Activated CD4-positive, alpha-beta memory T cell treated with anti-CD3 and anti-CD28 coated beads for 36 hours (primary cell): ENCODE measurements at regions of chr12 and their contacts with region 1.

Region 1: GRCh38 chr12:54398995-54399793 is 14.7 kb upstream of the ZNF385A start:
- DNase-seq: peak; percentile 92
- H3K4me3 Mint-ChIP-seq: no peak overlapping the region
- H3K27ac Mint-ChIP-seq: no peak overlapping the region
- H3K4me1 Mint-ChIP-seq: peaks cover 9% of the 10 kb centered on the region
- H3K27me3 Mint-ChIP-seq: no peaks in the 10 kb centered on the region

Region 2: DNA sequence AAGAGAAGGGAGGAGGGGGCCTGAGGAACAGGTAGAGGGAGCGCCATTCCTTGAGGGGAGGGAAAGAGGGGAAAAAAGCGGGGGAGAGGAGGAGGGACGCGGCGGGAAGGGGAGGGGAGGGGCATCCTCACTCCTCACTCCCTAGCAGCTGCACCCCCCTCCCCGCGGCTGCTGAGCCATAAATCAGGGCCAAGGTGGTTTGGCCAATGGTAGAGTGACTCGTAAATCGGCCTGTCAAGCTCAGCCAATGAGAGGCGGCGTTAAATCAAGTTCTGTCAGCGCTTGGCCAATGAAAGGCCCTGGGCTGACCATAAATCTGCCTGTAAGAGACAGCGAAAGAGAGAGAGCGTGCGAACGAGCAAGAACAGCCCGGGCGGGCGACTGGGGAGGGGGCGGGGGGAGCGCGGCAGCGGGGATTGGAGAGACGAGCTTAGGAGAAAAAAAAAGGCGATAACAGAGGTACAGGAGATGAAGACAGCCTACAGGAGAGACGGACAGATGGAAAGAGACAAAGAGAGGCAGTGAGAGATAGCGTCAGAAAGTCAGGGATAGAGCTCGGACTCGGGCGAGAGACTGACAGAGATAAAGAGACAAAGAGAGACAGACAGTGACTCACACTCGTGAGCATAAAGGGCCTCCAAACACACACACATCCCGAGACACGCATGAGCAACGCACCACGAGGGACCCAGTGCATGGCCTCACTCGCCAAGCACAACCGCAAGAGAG is 40.0 kb before region 1 on chr12:
- CTCF ChIA-PET with region 1: interaction called, 11 read pairs
- POLR2A ChIA-PET with region 1: no interaction called
- intact Hi-C with region 1: no loop called
- DNase-seq: peak; percentile 97
- H3K4me3 Mint-ChIP-seq: no peak overlapping the region
- H3K27ac Mint-ChIP-seq: no peak overlapping the region
- H3K4me1 Mint-ChIP-seq: peaks cover 16% of the 10 kb centered on the region
- H3K27me3 Mint-ChIP-seq: no peaks in the 10 kb centered on the region

Region 3: DNA sequence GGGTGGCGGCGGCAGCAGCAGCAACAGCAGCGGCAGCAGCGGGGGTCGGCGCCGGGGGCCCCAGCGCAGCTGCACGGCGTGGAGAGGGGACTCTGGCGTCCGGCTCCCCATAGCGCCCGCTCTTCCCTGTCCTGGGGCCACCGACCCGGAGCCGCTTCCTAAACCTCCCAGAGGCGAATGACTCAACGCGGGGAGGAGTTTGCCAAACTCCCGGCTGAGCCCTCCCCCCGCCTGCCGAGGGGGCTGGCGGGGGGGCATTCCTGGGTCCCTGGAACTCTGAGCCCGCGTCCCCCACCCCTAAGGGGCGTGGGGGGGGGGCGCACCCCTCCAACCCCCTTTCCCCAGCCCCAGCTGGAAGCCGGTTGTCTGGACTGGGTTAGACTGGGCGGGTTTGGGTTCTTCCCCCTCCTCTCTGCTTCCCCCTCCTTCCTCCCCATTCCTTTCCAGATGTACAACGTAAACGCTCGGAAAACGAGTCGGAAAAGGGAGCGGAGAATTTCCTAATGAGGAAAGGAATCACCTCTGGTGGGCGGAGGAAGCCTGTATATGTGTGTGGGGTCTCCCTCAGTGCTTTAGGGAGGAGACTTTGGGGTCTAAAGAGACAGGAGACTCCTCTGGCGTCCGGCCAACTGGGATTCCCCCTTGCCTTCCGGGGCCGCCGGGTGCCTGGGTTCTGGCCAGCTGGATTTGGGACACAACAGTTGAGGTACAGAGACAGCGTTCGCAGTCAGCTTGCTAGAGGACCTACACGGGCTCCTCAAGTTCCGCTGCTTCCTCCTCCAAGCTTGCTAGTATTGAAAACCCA is 20.1 kb after region 1 on chr12 and contains the start of gene ITGA5:
- CTCF ChIA-PET with region 1: interaction called, 319 read pairs
- POLR2A ChIA-PET with region 1: interaction called, 3 read pairs
- intact Hi-C with region 1: no loop called
- DNase-seq: peak; percentile 63
- H3K4me3 Mint-ChIP-seq: peak within 1 kb of the TSS; percentile 93
- H3K27ac Mint-ChIP-seq: peak within 1 kb of the TSS; percentile 91
- H3K4me1 Mint-ChIP-seq: peaks cover 45% of the 10 kb centered on the region
- H3K27me3 Mint-ChIP-seq: no peaks in the 10 kb centered on the region
- total RNA-seq, gene ITGA5: 33.8 to 34.9 TPM

Region 4: DNA sequence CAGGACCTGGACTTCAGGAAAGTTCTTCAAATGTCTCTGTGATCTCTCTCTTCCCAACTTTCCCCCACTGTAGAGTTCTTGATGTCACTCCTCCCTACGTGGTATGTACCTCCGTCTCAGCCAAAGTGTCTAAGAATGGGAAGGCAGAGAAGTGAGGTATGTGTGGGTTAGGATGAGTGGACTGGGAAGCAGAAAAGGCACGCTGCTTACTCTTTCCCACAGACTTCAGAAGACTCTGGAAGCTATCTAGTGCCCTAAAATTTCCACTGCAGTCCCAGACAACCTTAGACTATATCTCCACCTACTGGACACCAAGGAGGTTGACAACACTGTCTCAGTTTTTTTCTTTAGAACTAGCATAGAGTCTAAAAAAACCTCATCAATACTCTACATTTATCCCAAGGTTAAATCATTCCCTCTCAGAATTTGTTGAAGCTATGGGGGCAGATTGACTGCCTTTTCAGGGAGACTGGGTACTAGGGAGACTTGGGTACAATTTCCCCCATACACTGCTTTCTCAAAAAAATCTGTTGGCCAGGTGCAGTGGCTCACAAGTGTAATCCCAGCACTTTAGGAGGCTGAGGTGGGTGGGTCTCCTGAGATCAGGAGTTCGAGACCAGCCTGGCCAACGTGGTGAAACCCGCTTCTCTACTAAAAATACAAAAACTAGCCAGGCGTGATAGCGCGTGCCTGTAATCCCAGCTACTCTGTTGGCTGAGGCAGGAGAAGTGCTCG is 40.5 kb after region 1 on chr12:
- CTCF ChIA-PET with region 1: interaction called, 693 read pairs
- POLR2A ChIA-PET with region 1: interaction called, 22 read pairs
- intact Hi-C with region 1: loop called (anchors 1 kb)
- DNase-seq: no peak
- H3K4me3 Mint-ChIP-seq: no peak overlapping the region
- H3K27ac Mint-ChIP-seq: no peak overlapping the region
- H3K4me1 Mint-ChIP-seq: peaks cover 6% of the 10 kb centered on the region
- H3K27me3 Mint-ChIP-seq: peaks cover 2% of the 10 kb centered on the region

Region 5: DNA sequence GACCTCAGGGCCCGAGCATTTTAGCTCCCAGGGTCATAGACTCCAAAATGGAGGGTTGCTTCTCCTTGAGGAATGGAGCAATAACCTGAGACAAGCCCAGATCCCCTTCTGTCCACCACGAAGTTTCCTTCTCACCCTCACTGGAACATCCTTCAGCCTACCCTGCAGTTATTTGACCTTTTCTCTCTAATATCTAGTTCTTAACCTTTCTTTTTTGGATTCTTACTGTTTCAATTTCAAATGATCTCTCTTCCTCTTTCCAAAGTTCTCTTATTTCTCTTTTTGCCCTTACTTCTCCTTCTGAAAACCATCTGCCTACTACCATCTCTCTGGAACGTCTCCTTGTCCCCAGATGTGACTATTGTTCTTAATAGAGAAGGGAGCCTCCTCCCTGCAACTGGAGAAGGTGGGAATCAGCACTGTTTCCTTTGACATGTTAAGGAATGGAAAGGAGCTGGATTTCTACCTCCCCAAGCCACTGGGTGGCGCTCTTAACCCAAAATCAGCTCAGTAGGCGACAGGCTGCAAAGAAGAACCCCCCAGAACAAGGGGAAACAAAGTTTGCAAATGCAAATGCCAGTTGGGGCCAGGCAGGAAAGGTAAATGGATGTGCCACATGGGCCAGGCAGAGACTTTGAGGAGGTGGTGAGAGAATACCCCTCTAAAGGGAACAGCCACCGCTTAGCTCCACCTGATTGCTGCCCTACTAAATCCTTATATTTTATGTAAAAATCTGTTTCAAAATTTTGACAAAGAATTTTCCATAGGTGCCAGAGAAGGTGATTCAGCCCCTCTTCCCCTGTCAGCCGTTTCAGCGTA is 127.8 kb after region 1 on chr12:
- CTCF ChIA-PET with region 1: interaction called, 11 read pairs
- POLR2A ChIA-PET with region 1: no interaction called
- intact Hi-C with region 1: no loop called
- DNase-seq: peak; percentile 64
- H3K4me3 Mint-ChIP-seq: no peak overlapping the region
- H3K27ac Mint-ChIP-seq: peak overlapping the region; percentile 9
- H3K4me1 Mint-ChIP-seq: peaks cover 23% of the 10 kb centered on the region
- H3K27me3 Mint-ChIP-seq: no peaks in the 10 kb centered on the region